Left cardiac atrium (tissue), 4 donors: ENCODE measurements at regions of chr1 and their contacts with region 1.

Region 1: GRCh38 chr1:2412519-2413233 is at the start of gene PEX10:
- DNase-seq: peak; percentile 98
- ATAC-seq: peak; percentile 96 to 97
- total RNA-seq, gene PEX10: 12.3 to 14.5 TPM

Region 2: DNA sequence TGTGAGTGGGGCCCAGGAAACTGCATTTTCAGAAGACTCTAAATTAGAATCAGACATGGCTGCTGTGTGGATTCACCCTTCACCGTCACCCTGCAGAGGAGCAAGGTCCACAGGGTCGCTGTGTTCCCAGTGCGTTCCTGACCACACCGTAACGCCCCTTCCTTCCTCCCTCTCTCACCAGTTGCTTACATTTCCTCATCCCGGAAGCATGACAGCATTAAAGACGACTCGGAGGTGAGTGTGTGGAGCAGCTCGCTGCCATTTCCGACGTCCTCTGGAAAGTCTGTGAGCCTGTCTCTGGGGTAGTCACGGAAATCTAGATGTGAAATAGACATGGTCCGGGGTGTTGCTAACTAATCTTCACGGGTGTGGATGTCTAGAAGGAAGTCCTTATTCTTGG is 264.0 kb before region 1 on chr1:
- intact Hi-C with region 1: no loop called
- DNase-seq: no peak
- ATAC-seq: peak; percentile 15 to 24

Region 3: GRCh38 chr1:2548033-2548589 is 135.4 kb after region 1 on chr1:
- intact Hi-C with region 1: loop called (anchors 1 to 2 kb)
- DNase-seq: peak; percentile 81
- ATAC-seq: peak; percentile 51 to 52

Region 4: GRCh38 chr1:2642560-2643413 is 230.1 kb after region 1 on chr1:
- intact Hi-C with region 1: loop called in 1 of 2 experiments (anchors 10 kb)
- DNase-seq: peak; percentile 94
- ATAC-seq: peak; percentile 94

Region 5: GRCh38 chr1:2786329-2787162 is 373.9 kb after region 1 on chr1:
- intact Hi-C with region 1: loop called (anchors 2 to 5 kb)
- DNase-seq: peak; percentile 56
- ATAC-seq: peak; percentile 38 to 51

Region 6: DNA sequence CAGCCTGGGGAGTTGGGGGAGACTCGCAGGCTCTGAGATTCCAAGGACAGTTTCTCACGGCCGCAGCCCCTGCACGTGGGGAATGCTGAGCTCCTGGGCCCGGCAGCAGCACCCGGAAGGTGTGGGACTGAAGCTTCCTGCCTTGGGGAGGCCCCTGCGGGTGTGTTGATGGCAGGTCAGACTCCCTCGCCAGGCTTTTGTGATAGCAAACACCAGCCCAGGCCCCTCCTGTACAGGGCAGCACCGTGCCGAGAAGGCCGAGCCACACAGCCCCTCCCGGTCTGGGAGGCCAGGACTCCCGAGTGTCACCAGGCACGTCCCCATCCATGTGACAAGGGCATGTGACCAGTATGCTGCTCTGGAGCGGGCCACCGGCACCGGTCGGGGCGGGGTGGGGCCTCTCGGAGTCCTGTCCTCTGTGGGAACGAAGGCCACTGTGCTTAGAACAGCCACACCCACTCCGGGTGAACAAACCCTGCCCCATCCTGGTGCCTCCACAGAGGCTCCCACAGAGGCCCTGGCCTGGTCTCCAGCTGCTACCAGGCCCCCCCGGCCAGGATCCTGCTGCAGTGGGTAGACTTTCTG is 1010.7 kb after region 1 on chr1:
- intact Hi-C with region 1: loop called in 1 of 2 experiments (anchors 5 kb)
- DNase-seq: peak; percentile 60
- ATAC-seq: peak; percentile 62